HepG2 (cell line): ENCODE measurements at regions of chr5 and their contacts with region 1.

Region 1: GRCh38 chr5:18465833-18466591 is 831.8 kb downstream of the TAF11L14 start:
- DNase-seq: peak; percentile 41
- ATAC-seq: peak; percentile 92
- H3K4me3 ChIP-seq: no peak overlapping the region
- H3K27ac ChIP-seq: no peak overlapping the region
- H3K4me1 ChIP-seq: no peaks in the 10 kb centered on the region
- H3K27me3 ChIP-seq: no peaks in the 10 kb centered on the region
- CTCF ChIP-seq: peak; percentile 75
- EP300 ChIP-seq: no peak
- POLR2A ChIP-seq: no peak
- RAD21 ChIP-seq: peak; percentile 34; the same call in 1 of the 2 replicates

Region 2: GRCh38 chr5:18506944-18507509 is 41.0 kb after region 1 on chr5:
- CTCF ChIA-PET with region 1: no interaction called
- POLR2A ChIA-PET with region 1: no interaction called
- in situ Hi-C with region 1: no loop called
- intact Hi-C with region 1: no loop called
- DNase-seq: no peak
- ATAC-seq: no peak
- H3K4me3 ChIP-seq: no peak overlapping the region
- H3K27ac ChIP-seq: no peak overlapping the region
- H3K4me1 ChIP-seq: no peaks in the 10 kb centered on the region
- H3K27me3 ChIP-seq: no peaks in the 10 kb centered on the region
- CTCF ChIP-seq: no peak
- EP300 ChIP-seq: no peak
- POLR2A ChIP-seq: no peak
- RAD21 ChIP-seq: no peak

Region 3: DNA sequence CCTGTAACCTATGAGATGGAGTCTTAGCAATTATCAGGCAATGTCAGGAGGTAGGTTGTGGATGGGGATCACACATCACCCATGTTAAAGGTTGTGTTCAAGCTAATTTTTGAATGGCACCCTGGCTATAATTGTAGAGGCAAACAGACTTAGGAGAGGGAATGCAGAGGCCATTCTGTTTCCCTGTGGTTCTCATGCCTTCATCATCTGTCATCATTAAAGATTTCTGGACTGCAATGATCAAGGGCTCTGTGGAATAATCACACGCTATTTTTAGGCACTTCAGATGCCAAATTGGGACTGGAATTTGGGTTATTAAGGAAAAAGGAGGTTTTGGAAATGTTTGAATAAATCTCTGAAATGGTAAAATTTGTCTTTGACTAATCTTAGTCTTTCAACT is 233.7 kb after region 1 on chr5:
- CTCF ChIA-PET with region 1: interaction called, 15 read pairs
- POLR2A ChIA-PET with region 1: no interaction called
- in situ Hi-C with region 1: loop called (anchors 10 kb)
- intact Hi-C with region 1: no loop called
- DNase-seq: no peak
- ATAC-seq: no peak
- H3K4me3 ChIP-seq: no peak overlapping the region
- H3K27ac ChIP-seq: no peak overlapping the region
- H3K4me1 ChIP-seq: peaks cover 7% of the 10 kb centered on the region; the same call in 1 of the 2 replicates
- H3K27me3 ChIP-seq: no peaks in the 10 kb centered on the region
- CTCF ChIP-seq: no peak
- EP300 ChIP-seq: no peak
- POLR2A ChIP-seq: no peak
- RAD21 ChIP-seq: no peak

Region 4: GRCh38 chr5:19608444-19609002 is 1142.5 kb after region 1 on chr5:
- CTCF ChIA-PET with region 1: no interaction called
- POLR2A ChIA-PET with region 1: no interaction called
- in situ Hi-C with region 1: no loop called
- intact Hi-C with region 1: loop called (anchors 10 kb)
- DNase-seq: no peak
- ATAC-seq: no peak
- H3K4me3 ChIP-seq: no peak overlapping the region
- H3K27ac ChIP-seq: no peak overlapping the region
- H3K4me1 ChIP-seq: no peaks in the 10 kb centered on the region
- H3K27me3 ChIP-seq: no peaks in the 10 kb centered on the region
- CTCF ChIP-seq: no peak
- EP300 ChIP-seq: no peak
- POLR2A ChIP-seq: no peak
- RAD21 ChIP-seq: no peak